ENCODE measurements at regions of chr11 and their contacts with region 1.

Region 1: DNA sequence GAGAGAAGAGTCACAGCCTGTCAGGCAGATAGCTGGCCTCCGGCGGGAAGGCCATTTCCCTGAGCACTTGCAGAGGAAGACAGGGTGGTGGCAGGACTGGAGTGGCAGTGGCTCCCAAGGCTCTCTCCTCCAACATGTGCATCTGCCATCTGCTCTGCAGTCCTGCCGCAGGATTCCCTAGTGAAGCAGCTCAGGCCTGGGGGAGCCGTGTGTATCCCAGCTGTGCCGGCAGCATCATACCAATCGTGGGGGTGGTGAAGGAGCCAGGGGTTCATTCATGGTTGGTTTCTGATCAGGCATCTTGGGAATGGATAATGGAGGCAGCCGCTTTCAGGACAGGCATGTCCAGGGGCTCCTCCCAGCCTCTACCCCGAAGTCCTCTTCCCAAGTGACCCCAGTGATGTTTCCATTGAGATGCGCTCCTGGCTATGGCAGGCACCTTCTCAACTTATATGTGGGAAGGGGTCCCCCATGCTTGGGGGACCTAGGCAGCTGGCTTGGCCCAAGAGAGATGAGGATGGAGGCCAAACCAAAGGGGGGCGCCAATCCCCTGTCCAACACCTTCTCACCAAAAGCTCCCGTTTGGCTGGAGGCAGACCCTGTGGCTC is 6.1 kb downstream of the TAGLN start:
- DNase-seq: peak in 1 of 3 donors; percentile 25
- ATAC-seq: no peak
- H3K4me3 ChIP-seq: no peak overlapping the region
- H3K4me1 ChIP-seq: no peaks in the 10 kb centered on the region
- CTCF ChIP-seq: no peak

Region 2: DNA sequence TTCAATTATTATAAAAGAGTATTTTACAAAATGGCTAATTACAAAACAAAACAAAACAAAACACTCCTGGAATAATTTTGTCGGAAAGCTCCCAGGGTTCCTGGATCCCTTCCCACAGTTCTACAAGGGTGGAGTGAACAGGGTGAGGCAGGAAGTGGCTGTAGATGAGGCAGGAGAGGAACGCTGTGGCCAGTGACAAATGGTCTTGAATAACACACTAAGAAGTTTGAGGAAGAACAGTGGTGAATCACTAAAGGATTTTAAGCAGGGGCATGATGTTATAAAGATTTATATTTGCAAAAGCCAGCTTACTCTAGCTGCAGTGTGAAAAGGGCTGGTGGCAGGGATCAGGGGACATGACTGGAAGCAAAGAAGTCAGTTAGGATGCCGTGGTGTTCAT is 334.1 kb before region 1 on chr11:
- intact Hi-C with region 1: no loop called
- DNase-seq: no peak
- ATAC-seq: peak; percentile 78
- H3K4me3 ChIP-seq: no peak overlapping the region
- H3K4me1 ChIP-seq: no peaks in the 10 kb centered on the region
- CTCF ChIP-seq: no peak

Region 3: GRCh38 chr11:117083011-117083935 is 122.0 kb before region 1 on chr11:
- intact Hi-C with region 1: no loop called
- DNase-seq: no peak
- ATAC-seq: no peak
- H3K4me3 ChIP-seq: no peak overlapping the region
- H3K4me1 ChIP-seq: peaks cover 1% of the 10 kb centered on the region
- CTCF ChIP-seq: no peak

Region 4: GRCh38 chr11:117134431-117134830 is 70.9 kb before region 1 on chr11:
- intact Hi-C with region 1: loop called in 1 of 2 experiments (anchors 5 kb)
- DNase-seq: no peak
- ATAC-seq: no peak
- H3K4me3 ChIP-seq: no peak overlapping the region
- H3K4me1 ChIP-seq: no peaks in the 10 kb centered on the region
- CTCF ChIP-seq: no peak

Measured in mucosa of descending colon (tissue), 3 donors.